ENCODE measurements at regions of chr6 and their contacts with region 1.

Region 1: GRCh38 chr6:14066782-14067406 is 50.7 kb upstream of the CD83 start:
- DNase-seq: peak; percentile 72
- H3K4me3 Mint-ChIP-seq: peak overlapping the region; percentile 58
- H3K27ac Mint-ChIP-seq: peak overlapping the region; percentile 81
- H3K4me1 Mint-ChIP-seq: peaks cover 19% of the 10 kb centered on the region
- H3K27me3 Mint-ChIP-seq: peaks cover 25% of the 10 kb centered on the region

Region 2: GRCh38 chr6:13336553-13336952 is 730.3 kb before region 1 on chr6:
- intact Hi-C with region 1: loop called (anchors 10 kb)
- DNase-seq: peak; percentile 93
- H3K4me3 Mint-ChIP-seq: no peak overlapping the region
- H3K27ac Mint-ChIP-seq: no peak overlapping the region
- H3K4me1 Mint-ChIP-seq: peaks cover 34% of the 10 kb centered on the region
- H3K27me3 Mint-ChIP-seq: no peaks in the 10 kb centered on the region

Region 3: GRCh38 chr6:13795041-13795750 is 271.7 kb before region 1 on chr6:
- intact Hi-C with region 1: loop called (anchors 2 kb)
- DNase-seq: peak; percentile 95
- H3K4me3 Mint-ChIP-seq: no peak overlapping the region
- H3K27ac Mint-ChIP-seq: peak overlapping the region; percentile 51
- H3K4me1 Mint-ChIP-seq: peaks cover 14% of the 10 kb centered on the region
- H3K27me3 Mint-ChIP-seq: no peaks in the 10 kb centered on the region

Region 4: GRCh38 chr6:13873285-13874190 is 193.4 kb before region 1 on chr6:
- intact Hi-C with region 1: no loop called
- DNase-seq: peak; percentile 90
- H3K4me3 Mint-ChIP-seq: peak overlapping the region; percentile 85
- H3K27ac Mint-ChIP-seq: no peak overlapping the region
- H3K4me1 Mint-ChIP-seq: peaks cover 9% of the 10 kb centered on the region
- H3K27me3 Mint-ChIP-seq: peaks cover 17% of the 10 kb centered on the region

Region 5: DNA sequence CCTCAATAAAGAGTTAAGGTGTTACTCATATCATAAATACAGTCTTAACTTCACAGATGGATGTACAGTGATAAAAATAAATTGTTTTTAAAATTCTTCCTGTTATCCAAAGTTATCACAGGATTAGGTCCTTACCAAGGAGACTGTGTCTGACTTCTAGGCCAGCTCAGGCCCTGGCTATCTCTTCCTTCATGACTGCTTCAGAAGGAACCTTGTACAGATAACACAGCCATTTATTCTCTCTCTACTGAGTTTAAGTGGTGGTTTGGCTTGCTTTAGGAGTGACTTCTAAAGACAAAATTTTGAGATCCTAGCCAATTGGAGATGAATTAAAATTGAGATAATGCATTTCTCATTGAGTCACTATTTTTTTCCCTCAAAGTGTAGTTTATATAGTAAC is 182.9 kb before region 1 on chr6:
- intact Hi-C with region 1: no loop called
- DNase-seq: no peak
- H3K4me3 Mint-ChIP-seq: no peak overlapping the region
- H3K27ac Mint-ChIP-seq: no peak overlapping the region
- H3K4me1 Mint-ChIP-seq: no peaks in the 10 kb centered on the region
- H3K27me3 Mint-ChIP-seq: no peaks in the 10 kb centered on the region

Region 6: GRCh38 chr6:13908955-13909381 is 157.9 kb before region 1 on chr6:
- intact Hi-C with region 1: loop called (anchors 1 kb)
- DNase-seq: peak; percentile 80
- H3K4me3 Mint-ChIP-seq: no peak overlapping the region
- H3K27ac Mint-ChIP-seq: no peak overlapping the region
- H3K4me1 Mint-ChIP-seq: peaks cover 6% of the 10 kb centered on the region
- H3K27me3 Mint-ChIP-seq: peaks cover 45% of the 10 kb centered on the region

Region 7: DNA sequence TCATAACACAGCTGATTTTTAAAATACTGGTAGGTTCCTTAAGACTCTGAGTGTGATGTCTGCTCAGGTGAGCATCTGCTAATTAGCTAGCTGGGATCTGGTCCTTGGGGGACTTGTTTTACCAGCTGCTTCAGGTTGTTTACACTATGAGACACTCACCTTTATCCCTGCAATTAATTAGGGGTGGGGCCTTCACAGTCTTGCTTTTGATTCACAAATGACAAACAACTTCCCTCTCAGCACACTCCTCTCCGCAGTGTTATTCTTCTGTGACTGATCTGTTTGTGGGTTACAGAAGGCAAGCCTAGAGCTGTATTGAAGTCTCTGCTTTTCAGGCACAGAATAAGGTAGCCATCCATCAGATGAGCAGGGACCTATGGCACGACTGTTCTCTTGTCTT is 11.4 kb before region 1 on chr6:
- intact Hi-C with region 1: no loop called
- DNase-seq: no peak
- H3K4me3 Mint-ChIP-seq: no peak overlapping the region
- H3K27ac Mint-ChIP-seq: no peak overlapping the region
- H3K4me1 Mint-ChIP-seq: no peaks in the 10 kb centered on the region
- H3K27me3 Mint-ChIP-seq: peaks cover 28% of the 10 kb centered on the region

Region 8: DNA sequence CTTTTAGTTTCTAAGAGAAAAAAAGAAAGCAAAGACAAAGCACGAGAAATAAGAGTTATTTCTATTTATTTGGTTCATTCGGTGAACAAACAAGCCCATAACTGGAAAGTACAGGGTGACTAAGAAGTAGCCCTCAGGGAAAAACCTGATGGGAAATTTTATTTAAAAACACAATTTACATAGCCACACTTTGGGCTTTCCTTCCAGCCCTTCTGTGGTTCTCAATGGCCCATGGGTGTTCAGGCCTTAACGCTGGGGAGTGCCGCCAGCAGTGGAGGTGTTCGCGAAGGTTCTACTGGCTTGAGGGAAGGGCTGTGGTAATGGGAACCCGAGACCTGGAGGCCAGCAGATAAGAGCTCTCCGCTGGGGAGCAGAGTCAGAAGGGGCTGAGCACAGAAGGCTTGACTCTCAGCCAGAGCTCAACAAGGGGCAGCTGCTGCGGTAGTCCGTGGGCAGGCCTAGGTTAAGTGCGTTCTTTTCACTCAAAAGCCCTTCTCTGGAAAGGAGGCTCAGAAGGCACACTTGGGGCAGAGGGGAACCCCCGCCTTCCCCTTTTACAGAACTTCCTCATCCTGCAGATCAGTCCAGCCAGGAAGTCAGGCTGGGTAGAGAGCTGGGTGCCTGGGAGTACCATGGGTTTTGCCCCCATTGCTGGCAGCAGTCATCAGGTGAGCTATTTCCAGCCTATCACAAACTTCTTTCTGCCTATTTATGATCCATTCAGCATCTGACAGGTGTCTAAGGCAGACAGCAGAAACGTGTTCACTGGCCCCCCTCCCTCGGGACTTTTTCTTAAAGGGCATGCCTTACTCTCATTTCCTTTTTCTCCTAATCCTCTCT is 41.9 kb after region 1 on chr6:
- intact Hi-C with region 1: loop called (anchors 1 kb)
- DNase-seq: peak; percentile 66
- H3K4me3 Mint-ChIP-seq: peak overlapping the region; percentile 74
- H3K27ac Mint-ChIP-seq: peak overlapping the region; percentile 90
- H3K4me1 Mint-ChIP-seq: peaks cover 28% of the 10 kb centered on the region
- H3K27me3 Mint-ChIP-seq: peaks cover 10% of the 10 kb centered on the region

Region 9: GRCh38 chr6:14693301-14694192 is 626.7 kb after region 1 on chr6:
- intact Hi-C with region 1: no loop called
- DNase-seq: no peak
- H3K4me3 Mint-ChIP-seq: no peak overlapping the region
- H3K27ac Mint-ChIP-seq: peak overlapping the region; percentile 30
- H3K4me1 Mint-ChIP-seq: no peaks in the 10 kb centered on the region
- H3K27me3 Mint-ChIP-seq: peaks cover 4% of the 10 kb centered on the region